Gastrocnemius medialis (tissue), 4 donors: ENCODE measurements at regions of chr5 and their contacts with region 1.

Region 1: GRCh38 chr5:132064738-132065331 is 4.4 kb downstream of the IL3 start:
- DNase-seq: peak in 1 of 2 donors; percentile 36
- ATAC-seq: peak in 1 of 2 donors; percentile 64
- H3K4me3 ChIP-seq: no peak overlapping the region
- H3K27ac ChIP-seq: no peak overlapping the region
- H3K4me1 ChIP-seq: no peaks in the 10 kb centered on the region
- H3K27me3 ChIP-seq: no peaks in the 10 kb centered on the region
- CTCF ChIP-seq: peak; percentile 47 to 90 (median 81)
- POLR2A ChIP-seq: no peak

Region 2: DNA sequence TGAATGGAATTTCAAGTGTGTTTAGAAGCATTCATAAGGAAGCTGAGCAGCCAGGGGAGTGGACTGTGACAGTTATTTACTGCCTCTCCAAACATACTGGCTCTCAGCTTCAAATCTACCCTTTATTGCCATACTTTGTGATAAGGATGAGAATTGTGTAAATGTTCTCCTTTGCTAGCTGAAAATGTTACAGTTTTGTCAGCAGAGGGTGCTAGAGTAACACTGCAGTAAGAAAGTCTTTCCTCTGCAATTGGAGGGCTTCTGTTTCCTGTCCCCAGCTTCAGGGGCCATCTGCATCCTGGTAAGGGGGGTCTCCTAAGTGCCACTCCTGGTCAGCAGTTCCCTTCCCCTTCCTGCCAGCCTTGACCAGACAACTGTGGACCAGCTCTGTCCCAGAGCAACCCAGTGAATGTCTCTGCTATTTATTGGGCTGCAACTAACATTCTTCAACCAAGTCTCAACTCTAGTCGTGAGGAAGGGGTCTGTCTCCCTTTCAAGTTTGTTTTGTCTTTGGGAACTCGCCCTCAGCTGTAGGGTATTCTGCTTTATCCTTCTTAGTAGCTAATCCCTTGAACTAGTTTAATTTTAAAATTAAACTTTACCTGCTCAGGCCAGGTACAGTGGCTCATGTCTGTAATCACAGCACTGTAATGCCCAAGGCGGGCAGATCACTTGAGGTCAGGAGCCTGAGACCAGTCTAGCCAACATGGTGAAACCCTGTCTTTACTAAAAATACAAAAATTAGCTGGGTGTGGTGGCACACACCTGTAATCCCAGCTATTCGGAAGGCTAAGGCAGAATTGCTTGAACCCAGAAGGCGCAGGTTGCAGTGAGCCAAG is 475.1 kb before region 1 on chr5:
- in situ Hi-C with region 1: loop called in 1 of 4 experiments (anchors 10 kb)
- intact Hi-C with region 1: loop called (anchors 2 kb)
- DNase-seq: no peak
- ATAC-seq: peak; percentile 45 to 61
- H3K4me3 ChIP-seq: no peak overlapping the region
- H3K27ac ChIP-seq: no peak overlapping the region
- H3K4me1 ChIP-seq: peaks cover 6 to 18% of the 10 kb centered on the region in 2 donors
- H3K27me3 ChIP-seq: no peaks in the 10 kb centered on the region
- CTCF ChIP-seq: peak; percentile 77 to 91 (median 84)
- POLR2A ChIP-seq: no peak